Vagina (tissue), 2 donors: ENCODE measurements at regions of chr13 and their contacts with region 1.

Region 1: GRCh38 chr13:72970956-72971355 is 87.8 kb upstream of the KLF5 start:
- DNase-seq: no peak
- H3K4me3 ChIP-seq: no peak overlapping the region
- H3K27ac ChIP-seq: no peak overlapping the region
- H3K4me1 ChIP-seq: no peaks in the 10 kb centered on the region
- H3K27me3 ChIP-seq: no peaks in the 10 kb centered on the region
- CTCF ChIP-seq: no peak
- POLR2A ChIP-seq: no peak

Region 2: GRCh38 chr13:72931311-72931710 is 39.6 kb before region 1 on chr13:
- intact Hi-C with region 1: no loop called
- DNase-seq: no peak
- H3K4me3 ChIP-seq: no peak overlapping the region
- H3K27ac ChIP-seq: no peak overlapping the region
- H3K4me1 ChIP-seq: no peaks in the 10 kb centered on the region
- H3K27me3 ChIP-seq: no peaks in the 10 kb centered on the region
- CTCF ChIP-seq: no peak
- POLR2A ChIP-seq: no peak

Region 3: GRCh38 chr13:73015799-73016198 is 44.8 kb after region 1 on chr13:
- intact Hi-C with region 1: loop called (anchors 2 kb)
- DNase-seq: no peak
- H3K4me3 ChIP-seq: no peak overlapping the region
- H3K27ac ChIP-seq: no peak overlapping the region
- H3K4me1 ChIP-seq: no peaks in the 10 kb centered on the region
- H3K27me3 ChIP-seq: no peaks in the 10 kb centered on the region
- CTCF ChIP-seq: no peak
- POLR2A ChIP-seq: no peak

Region 4: DNA sequence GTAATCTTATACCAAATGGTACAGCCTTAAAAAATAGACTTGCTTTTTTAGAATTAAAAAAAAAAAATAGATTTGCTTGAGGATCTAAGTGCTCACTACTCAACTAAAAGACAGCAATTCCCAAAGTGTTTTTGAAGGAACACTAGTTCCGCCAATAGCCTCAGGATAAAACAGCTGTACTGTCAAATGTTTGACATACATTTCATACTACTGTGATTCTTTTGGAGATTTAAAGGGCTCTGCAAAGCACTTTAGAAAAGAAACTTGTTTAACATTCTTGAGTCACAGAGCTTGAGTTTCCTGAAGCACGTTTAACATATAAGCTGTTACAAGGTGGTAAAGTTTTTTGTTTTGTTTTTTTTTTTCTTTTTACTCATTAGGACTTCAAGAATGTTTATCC is 64.7 kb after region 1 on chr13:
- intact Hi-C with region 1: no loop called
- DNase-seq: no peak
- H3K4me3 ChIP-seq: no peak overlapping the region
- H3K27ac ChIP-seq: no peak overlapping the region
- H3K4me1 ChIP-seq: no peaks in the 10 kb centered on the region
- H3K27me3 ChIP-seq: no peaks in the 10 kb centered on the region
- CTCF ChIP-seq: no peak
- POLR2A ChIP-seq: no peak

Region 5: GRCh38 chr13:73832128-73832588 is 861.2 kb after region 1 on chr13:
- intact Hi-C with region 1: no loop called
- DNase-seq: no peak
- H3K4me3 ChIP-seq: no peak overlapping the region
- H3K27ac ChIP-seq: no peak overlapping the region
- H3K4me1 ChIP-seq: no peaks in the 10 kb centered on the region
- H3K27me3 ChIP-seq: no peaks in the 10 kb centered on the region
- CTCF ChIP-seq: no peak
- POLR2A ChIP-seq: no peak